ENCODE measurements at regions of chr15 and their contacts with region 1.

Region 1: DNA sequence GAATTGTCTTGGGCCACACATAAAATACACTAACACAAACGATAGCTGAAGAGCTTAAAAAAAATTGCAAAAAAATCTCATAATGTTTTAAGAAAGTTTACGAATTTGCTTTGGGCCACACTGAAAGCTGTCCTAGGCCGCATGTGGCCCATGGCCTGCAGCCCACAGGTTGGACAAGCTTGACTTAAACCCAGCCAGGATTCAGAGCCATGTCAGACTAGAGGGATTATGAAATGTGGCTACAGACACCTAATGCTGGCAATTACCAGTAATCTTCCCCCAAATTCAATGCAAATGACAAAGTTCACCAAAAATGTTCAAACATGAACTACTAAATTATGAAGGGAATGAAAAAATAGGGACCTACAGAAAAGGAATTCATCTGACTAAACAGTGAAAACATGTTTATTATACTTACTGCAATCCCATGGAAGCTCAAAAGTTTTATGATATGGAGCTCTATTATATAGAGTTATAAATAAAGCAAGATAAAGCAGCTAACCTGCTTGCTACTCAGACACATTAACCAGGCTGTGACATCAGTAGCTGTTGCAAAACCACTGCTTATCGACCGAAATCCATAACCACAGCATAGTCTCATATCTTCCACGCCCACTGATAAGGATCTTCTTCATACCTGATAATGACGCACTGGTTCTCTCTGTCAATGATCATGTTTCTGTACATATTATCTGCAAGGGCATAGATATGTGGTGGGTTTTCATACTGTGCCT is 49.2 kb downstream of the LDHAL6B start:
- DNase-seq: peak; percentile 65 to 87 (median 81)
- ATAC-seq: peak; percentile 77 to 84 (median 81)
- H3K4me3 ChIP-seq: no peak overlapping the region
- H3K27ac ChIP-seq: peak overlapping the region; percentile 25 to 87 (median 85)
- H3K4me1 ChIP-seq: peaks cover 0 to 35% (median 12%) of the 10 kb centered on the region in 4 donors
- H3K27me3 ChIP-seq: no peaks in the 10 kb centered on the region
- CTCF ChIP-seq: no peak
- POLR2A ChIP-seq: peak; percentile 34

Region 2: GRCh38 chr15:59329570-59330350 is 73.9 kb after region 1 on chr15:
- intact Hi-C with region 1: no loop called
- DNase-seq: no peak
- ATAC-seq: peak; percentile 55 to 77 (median 62)
- H3K4me3 ChIP-seq: peak overlapping the region in 1 of 3 donors; percentile 5
- H3K27ac ChIP-seq: peak overlapping the region; percentile 17 to 71 (median 24)
- H3K4me1 ChIP-seq: peaks cover 0 to 48% (median 19%) of the 10 kb centered on the region in 4 donors
- H3K27me3 ChIP-seq: no peaks in the 10 kb centered on the region
- CTCF ChIP-seq: no peak
- POLR2A ChIP-seq: no peak

Region 3: DNA sequence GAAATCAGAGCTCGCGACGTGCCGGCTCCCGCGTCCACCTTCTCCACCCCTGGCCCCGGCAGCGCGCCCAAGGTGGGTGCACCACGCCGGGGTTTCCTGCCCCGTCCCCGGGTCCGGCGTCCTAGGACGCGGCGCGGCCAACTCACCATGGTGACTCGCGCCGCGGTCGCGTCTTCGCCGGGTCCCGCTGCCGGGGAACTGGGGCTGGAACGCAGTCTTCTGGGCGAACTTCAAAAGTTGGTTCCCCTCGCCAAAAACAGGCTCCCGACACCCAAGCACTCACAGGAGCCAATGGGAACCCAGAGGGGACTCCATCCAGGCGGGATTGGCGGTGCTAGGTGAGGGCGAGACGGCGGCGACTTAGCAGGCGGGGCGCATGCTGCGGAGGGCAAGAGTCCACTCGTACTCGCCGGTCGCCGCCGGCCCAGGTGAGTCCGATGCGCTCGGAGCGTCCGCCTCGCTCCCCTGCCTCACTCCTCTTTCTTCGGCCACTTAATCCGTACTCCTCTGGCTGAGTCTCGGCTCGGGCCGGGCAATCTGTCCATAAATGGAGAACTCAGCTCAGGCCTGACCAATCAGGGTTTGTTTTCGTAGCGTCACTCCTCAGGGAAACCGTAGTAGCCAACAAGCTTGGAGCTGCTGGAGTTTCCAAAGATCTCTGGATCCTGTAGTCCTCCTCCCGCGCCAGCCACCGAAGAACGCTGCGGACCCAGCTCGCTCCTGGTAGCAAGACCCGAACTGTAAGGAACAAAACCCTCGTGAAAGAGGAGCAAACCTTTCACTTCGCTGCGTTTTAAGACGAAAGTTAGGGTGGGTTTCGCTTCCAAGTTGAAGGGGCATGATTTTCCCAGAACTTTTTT is 116.8 kb after region 1 on chr15 and contains the start of gene MYO1E:
- intact Hi-C with region 1: loop called in 1 of 2 experiments (anchors 5 kb)
- DNase-seq: peak; percentile 87 to 94 (median 93)
- ATAC-seq: peak; percentile 86 to 94 (median 88)
- H3K4me3 ChIP-seq: peak within 1 kb of the TSS; percentile 79 to 98 (median 90)
- H3K27ac ChIP-seq: peak within 1 kb of the TSS; percentile 93 to 99 (median 95)
- H3K4me1 ChIP-seq: peaks cover 0 to 13% (median 2%) of the 10 kb centered on the region in 4 donors
- H3K27me3 ChIP-seq: no peaks in the 10 kb centered on the region
- CTCF ChIP-seq: no peak
- POLR2A ChIP-seq: peak; percentile 97
- total RNA-seq, gene MYO1E: 45.2 to 139 (median 68.9) TPM

Measured in right lobe of liver (tissue), 6 donors.